ENCODE measurements at regions of chr1 and their contacts with region 1.

Region 1: GRCh38 chr1:33137800-33138199 is 44.0 kb downstream of the TRIM62 start:
- DNase-seq: no peak

Region 2: DNA sequence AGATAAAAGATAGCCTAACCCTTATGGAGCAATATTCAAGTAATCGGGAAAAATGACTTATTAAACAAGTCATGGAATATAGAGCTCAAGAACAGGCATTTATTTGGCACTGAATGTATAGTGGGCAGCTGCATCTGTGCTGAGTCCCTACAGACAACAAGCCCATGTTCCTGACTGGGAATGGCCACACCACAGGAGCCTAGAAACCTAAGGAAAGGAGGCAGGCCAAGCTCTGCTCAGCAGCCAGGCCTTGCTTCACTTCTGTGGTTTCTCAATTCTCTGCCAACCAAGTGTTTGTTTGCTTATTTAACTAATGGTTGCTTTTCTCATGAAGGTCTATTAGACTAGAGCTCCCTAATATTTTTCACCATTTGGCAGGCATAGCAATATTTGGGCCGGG is 122.6 kb before region 1 on chr1:
- intact Hi-C with region 1: no loop called
- DNase-seq: no peak

Region 3: DNA sequence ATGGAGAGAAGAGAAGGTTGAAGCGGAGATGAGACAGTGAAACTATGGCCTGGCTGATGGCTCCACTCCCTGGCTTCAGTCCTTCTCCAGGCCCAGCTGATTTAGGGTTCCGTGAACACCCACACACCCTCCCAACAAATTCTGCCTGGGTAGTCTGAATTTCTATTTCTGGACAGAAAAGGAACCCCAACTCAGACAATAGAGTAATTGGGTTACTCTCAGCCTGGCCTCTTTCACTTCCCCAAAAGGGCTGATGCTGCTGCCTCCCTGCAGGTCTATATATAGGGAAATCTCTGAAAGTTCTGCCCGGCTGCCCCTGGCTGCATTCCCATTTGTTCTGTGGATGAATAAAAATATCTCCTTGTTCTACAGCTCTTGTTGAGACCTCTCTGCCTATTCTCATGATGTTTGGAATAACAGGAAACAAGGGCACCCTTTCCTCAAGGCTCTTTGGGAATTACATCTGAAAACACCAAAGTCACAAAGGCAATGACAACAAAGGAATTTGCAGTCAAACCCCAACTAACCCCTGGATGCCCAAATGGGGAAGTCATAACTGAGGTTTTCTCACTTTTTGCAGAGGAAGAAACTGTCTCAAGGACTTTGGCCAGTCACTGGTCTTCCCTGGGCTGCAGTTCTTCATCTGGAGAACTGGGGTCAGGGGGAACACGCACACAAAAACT is 323.3 kb after region 1 on chr1:
- intact Hi-C with region 1: loop called (anchors 10 kb)
- DNase-seq: no peak

Measured in cardiac septum (tissue), 1 donor.